ENCODE measurements at regions of chr5 and their contacts with region 1.

Region 1: DNA sequence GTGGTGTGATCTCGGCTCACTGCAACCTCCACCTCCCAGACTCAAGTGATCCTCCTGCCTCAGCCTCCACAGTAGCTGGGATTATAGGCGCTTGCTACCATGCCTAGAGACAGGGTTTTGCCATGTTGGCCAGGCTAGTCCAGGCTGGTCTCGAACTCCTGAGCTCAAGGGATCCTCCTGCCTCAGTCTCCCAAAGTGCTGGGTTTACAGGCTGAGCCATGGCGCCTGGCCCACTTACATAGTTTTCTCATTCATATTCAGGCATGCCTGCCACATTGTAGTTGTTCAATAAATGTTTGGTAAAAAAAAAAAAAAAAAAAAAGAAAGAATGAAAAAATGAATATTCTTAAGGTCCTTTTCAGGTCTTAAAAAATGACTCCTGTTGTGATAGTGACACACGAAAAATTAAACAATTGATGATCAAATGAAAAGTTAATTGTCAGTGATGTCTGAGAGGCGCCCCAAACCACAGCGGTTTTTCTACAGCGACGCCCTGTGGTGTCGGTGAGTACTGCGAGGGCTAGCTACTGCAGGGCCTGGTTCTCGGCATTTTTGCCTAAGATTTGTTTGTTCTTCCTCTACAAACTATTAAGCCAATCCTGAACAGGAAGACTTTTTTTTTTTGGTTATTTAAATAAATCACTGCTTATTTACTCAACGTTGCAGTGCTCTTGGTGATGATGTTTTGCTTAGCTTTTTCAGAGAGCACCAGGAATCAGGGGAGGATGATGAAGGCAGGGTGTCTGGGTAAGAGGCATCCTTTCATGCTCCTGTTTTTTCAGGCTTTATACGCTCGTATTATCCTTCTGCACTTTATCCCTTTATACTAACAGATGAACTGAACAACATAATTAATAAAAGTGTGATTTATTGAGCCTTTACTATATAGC is 67.0 kb upstream of the DPYSL3 start:
- DNase-seq: peak; percentile 24
- ATAC-seq: peak; percentile 71; the same call in 1 of the 2 replicates
- H3K4me3 ChIP-seq: no peak overlapping the region
- H3K27ac ChIP-seq: no peak overlapping the region
- H3K4me1 ChIP-seq: no peaks in the 10 kb centered on the region
- H3K27me3 ChIP-seq: no peaks in the 10 kb centered on the region
- CTCF ChIP-seq: peak; percentile 92

Region 2: DNA sequence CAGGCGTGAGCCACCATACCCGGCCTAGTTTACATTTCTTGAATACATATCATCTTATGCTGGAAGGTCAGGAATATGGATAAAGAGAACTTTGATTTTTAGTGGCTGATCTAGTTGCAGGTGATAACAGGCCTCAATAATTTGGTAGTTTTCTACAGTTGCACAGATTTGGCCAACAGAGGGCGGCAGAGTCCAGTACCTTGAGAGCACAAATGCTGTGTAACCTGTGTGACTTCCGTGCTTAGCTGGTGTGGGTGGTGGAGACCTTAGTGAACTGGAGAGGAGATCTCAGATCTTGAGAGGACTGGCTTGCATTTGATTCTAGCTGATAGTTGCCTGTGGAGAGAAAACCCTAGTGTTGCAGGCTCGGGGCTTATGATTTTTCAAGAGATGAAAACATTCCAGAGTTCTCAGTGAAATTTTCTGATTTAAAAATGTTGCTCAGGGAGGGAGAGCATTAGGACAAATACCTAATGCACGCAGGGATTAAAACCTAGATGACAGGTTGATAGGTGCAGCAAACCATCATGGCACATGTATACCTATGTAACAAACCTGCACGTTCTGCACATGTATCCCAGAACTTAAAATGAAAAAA is 1043.5 kb before region 1 on chr5:
- CTCF ChIA-PET with region 1: no interaction called
- POLR2A ChIA-PET with region 1: no interaction called
- in situ Hi-C with region 1: no loop called
- intact Hi-C with region 1: loop called (anchors 10 kb)
- DNase-seq: peak; percentile 52
- ATAC-seq: peak; percentile 93
- H3K4me3 ChIP-seq: no peak overlapping the region
- H3K27ac ChIP-seq: no peak overlapping the region
- H3K4me1 ChIP-seq: no peaks in the 10 kb centered on the region
- H3K27me3 ChIP-seq: no peaks in the 10 kb centered on the region
- CTCF ChIP-seq: peak; percentile 93

Region 3: GRCh38 chr5:147055850-147056566 is 520.9 kb before region 1 on chr5:
- CTCF ChIA-PET with region 1: no interaction called
- POLR2A ChIA-PET with region 1: no interaction called
- in situ Hi-C with region 1: no loop called
- intact Hi-C with region 1: no loop called
- DNase-seq: no peak
- ATAC-seq: no peak
- H3K4me3 ChIP-seq: no peak overlapping the region
- H3K27ac ChIP-seq: no peak overlapping the region
- H3K4me1 ChIP-seq: no peaks in the 10 kb centered on the region
- H3K27me3 ChIP-seq: no peaks in the 10 kb centered on the region
- CTCF ChIP-seq: no peak

Region 4: DNA sequence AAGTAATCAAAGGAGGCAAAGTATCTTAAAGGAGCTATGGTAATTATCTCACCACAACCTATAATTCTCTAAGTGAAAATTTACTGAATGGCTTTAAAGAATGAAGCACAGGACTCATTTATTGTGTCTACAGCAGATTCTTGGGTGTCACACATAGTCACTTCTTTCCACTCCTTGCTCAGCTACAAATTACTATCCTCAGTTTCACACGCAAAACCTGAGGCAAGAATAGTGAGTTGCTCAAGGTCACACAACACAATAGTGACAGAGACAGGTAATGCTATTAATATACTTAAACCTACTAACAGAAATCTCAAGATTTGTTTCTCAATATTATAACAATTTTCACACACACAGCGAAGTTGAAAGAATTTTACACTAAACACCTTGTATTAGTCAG is 462.9 kb before region 1 on chr5:
- CTCF ChIA-PET with region 1: interaction called, 14 read pairs
- POLR2A ChIA-PET with region 1: no interaction called
- in situ Hi-C with region 1: no loop called
- intact Hi-C with region 1: no loop called
- DNase-seq: no peak
- ATAC-seq: no peak
- H3K4me3 ChIP-seq: no peak overlapping the region
- H3K27ac ChIP-seq: no peak overlapping the region
- H3K4me1 ChIP-seq: no peaks in the 10 kb centered on the region
- H3K27me3 ChIP-seq: no peaks in the 10 kb centered on the region
- CTCF ChIP-seq: no peak

Region 5: DNA sequence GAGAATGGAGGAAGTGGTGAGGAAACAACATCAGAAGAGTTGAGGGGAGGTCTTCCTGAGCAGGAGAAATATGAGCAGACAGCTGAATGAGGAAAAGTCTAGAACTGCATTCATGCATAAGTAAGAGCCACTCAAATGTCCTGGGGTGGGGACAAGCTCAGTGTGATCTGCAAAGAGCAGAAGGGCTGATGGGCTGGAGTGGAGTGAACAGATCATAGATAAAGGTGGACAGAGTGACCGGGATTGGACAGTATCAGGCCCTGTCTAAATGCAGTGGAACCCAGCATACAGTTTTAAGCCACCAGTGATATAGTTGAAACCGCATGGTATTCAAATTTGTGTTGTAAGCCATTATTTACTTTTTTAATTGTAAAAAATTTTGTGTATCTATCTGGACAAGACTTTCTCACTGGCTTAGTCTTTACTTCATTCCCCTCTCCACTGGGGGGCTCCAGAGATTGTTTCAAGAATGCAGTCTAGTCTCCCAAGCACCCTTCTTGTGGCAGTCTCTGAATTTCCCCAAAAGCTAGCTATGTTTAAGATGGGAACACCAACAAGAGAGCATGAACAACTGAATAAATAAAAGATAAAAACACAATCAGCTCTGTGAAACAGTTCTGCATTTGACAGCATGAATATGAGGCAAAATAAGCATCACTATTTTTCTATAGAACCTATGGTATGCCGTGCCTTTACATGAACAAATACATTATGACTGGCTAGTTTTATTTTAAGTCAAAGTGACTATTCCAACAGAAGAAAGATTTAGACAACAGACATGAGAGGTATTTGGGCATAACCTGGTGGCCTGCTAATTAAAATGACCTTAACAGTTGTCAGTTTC is 352.7 kb before region 1 on chr5:
- CTCF ChIA-PET with region 1: no interaction called
- POLR2A ChIA-PET with region 1: no interaction called
- in situ Hi-C with region 1: no loop called
- intact Hi-C with region 1: loop called (anchors 2 kb)
- DNase-seq: no peak
- ATAC-seq: peak; percentile 83; the same call in 1 of the 2 replicates
- H3K4me3 ChIP-seq: no peak overlapping the region
- H3K27ac ChIP-seq: no peak overlapping the region
- H3K4me1 ChIP-seq: no peaks in the 10 kb centered on the region
- H3K27me3 ChIP-seq: no peaks in the 10 kb centered on the region
- CTCF ChIP-seq: peak; percentile 48; the same call in 1 of the 2 replicates

Region 6: DNA sequence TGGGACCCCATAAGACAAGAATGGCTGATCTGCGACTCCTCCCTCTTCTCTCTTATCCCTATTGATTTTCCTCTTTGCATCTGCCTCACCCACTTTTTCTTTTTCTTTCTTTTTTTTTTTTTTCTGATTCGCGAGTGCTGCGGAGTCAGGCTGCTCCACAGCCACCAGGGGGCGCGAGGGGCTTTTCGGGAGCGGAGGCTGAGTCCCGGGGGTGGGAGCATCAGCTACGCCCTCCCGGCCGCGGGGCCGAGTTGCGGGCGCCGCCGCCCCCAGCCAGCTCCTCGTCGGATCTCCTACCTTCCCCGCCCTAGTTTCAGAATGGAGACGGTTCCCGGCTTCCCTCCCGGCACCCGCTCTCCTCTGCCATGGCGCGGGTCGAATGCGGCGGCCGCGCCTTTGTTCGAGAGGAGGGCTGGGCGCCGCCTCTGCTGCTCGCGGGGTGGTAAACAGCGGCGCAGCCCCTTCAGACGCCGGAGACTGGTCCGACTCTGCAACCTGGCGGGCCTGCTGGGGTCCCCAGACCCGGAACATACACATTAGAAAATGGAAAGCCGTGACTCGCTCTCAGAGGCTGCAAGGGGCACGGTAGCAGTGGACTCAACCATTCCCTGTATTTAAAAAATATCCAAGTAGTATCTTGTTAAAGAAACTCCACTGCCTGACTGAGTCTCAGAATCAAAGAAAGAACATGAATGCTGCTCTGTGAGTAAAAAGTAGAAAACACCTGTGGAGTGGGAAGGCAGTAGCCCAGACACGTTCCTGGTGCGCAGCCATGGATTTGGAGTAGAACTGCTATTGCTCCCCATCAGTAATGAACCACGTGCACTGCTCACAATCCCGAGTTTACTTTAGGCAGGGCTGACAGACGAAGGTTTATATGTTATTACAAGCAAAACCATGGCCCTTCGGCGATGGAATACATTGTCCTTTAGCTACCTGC is 122.7 kb before region 1 on chr5:
- CTCF ChIA-PET with region 1: interaction called, 5 read pairs
- POLR2A ChIA-PET with region 1: interaction called, 3 read pairs
- in situ Hi-C with region 1: no loop called
- intact Hi-C with region 1: loop called (anchors 1 kb)
- DNase-seq: no peak
- ATAC-seq: peak; percentile 90
- H3K4me3 ChIP-seq: peak overlapping the region; percentile 51 to 61
- H3K27ac ChIP-seq: no peak overlapping the region
- H3K4me1 ChIP-seq: peaks cover 6% of the 10 kb centered on the region; the same call in 1 of the 2 replicates
- H3K27me3 ChIP-seq: peaks cover 14% of the 10 kb centered on the region
- CTCF ChIP-seq: peak; percentile 96

Region 7: GRCh38 chr5:147509710-147510651 is 66.9 kb before region 1 on chr5 and contains the start of gene DPYSL3:
- CTCF ChIA-PET with region 1: no interaction called
- POLR2A ChIA-PET with region 1: no interaction called
- in situ Hi-C with region 1: no loop called
- intact Hi-C with region 1: loop called (anchors 5 kb)
- DNase-seq: no peak
- ATAC-seq: peak; percentile 97
- H3K4me3 ChIP-seq: peak within 1 kb of the TSS; percentile 32 to 41
- H3K27ac ChIP-seq: no peak within 1 kb of the TSS
- H3K4me1 ChIP-seq: no peaks in the 10 kb centered on the region
- H3K27me3 ChIP-seq: peaks cover 16% of the 10 kb centered on the region
- CTCF ChIP-seq: peak; percentile 43
- total RNA-seq, gene DPYSL3: 1.1 TPM

Measured in Panc1 (cell line).